HCT116 (cell line): ENCODE measurements at regions of chr17 and their contacts with region 1.

Region 1: GRCh38 chr17:47840740-47841603 is at the start of gene SCRN2:
- DNase-seq: peak; percentile 81
- ATAC-seq: peak; percentile 88
- H3K4me3 ChIP-seq: peak within 1 kb of the TSS; percentile 94 to 98
- H3K27ac ChIP-seq: peak within 1 kb of the TSS; percentile 69
- H3K4me1 ChIP-seq: peaks cover 25 to 46% of the 10 kb centered on the region in 2 experiments
- H3K27me3 ChIP-seq: no peaks in the 10 kb centered on the region
- CTCF ChIP-seq: peak; percentile 98 to 100 (median 99)
- POLR2A ChIP-seq: no peak
- RAD21 ChIP-seq: peak; percentile 100
- total RNA-seq, gene SCRN2: 53.2 TPM

Region 2: DNA sequence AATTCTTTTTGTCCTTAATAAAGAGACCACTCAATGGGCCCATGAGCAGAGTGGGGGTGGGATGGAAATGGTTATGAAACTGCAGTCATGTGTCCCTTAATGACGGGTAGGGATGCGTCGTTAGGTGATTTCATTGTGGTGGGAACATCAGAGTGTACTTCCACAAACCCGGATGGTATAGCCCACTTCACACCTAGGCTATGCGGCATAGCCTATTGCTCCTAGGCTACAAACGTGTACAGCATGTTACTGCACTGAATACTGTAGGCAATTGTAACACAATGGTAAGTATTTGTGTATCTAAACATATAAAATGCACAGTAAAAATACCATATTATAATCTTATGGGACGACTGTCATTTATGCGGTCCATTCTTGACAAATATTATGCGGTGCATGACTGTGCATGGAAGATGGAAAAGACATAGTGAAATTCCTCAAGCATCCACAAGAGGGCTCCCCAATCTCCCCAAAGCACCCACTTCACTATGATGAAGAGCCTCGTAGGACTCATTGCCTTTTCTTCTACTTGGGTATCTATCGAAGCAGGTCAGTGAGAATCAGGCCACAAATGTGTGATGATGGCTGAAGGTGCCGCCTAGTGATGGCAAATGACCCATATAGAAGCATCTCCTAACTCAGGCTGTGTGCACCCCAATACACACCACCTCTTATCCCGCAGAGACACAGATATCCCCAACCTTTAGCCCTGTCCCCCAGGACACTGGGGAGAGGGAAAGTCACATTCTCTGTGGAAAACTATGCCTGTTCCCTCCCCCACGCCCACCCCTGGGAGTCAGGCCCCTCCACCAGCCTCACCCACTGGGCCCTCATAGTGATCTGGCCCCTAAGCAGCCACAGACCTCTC is 64.4 kb before region 1 on chr17:
- CTCF ChIA-PET with region 1: no interaction called
- POLR2A ChIA-PET with region 1: no interaction called
- RAD21 ChIA-PET with region 1: no interaction called
- intact Hi-C with region 1: loop called (anchors 1 kb)
- DNase-seq: peak; percentile 54
- ATAC-seq: peak; percentile 94
- H3K4me3 ChIP-seq: no peak overlapping the region
- H3K27ac ChIP-seq: no peak overlapping the region
- H3K4me1 ChIP-seq: no peaks in the 10 kb centered on the region
- H3K27me3 ChIP-seq: peaks cover 22% of the 10 kb centered on the region; the same call in 1 of the 2 replicates
- CTCF ChIP-seq: peak; percentile 84 to 88 (median 86)
- POLR2A ChIP-seq: no peak
- RAD21 ChIP-seq: peak; percentile 84

Region 3: DNA sequence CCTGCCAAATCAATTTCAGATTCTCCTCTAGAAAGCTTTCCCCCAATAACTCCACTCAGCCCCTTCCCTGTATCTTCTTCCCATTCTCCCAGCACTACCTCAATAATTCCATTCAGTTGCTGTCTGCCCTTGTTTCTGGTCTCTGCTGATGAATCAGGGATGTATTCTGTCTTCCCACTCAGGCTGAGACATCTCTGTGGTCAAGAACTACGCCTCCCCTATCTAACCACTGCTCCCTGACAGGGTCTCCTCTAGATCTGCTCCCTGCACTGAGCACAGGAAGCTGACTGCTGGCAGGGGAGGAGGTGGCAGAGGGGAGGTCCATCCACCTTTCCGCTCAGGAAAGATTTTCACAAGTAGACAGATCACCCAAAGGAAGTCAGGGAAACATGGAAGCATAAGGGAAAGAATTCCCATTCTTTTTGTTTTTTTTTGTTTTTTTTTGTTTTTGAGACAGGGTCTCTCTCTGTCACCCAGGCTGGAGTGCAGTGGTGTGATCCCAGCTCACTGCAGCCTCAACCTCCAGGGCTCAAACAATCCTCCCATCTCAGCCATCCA is 38.1 kb after region 1 on chr17:
- CTCF ChIA-PET with region 1: interaction called, 26 read pairs
- POLR2A ChIA-PET with region 1: no interaction called
- RAD21 ChIA-PET with region 1: interaction called in 1 of 2 experiments, 3 read pairs
- intact Hi-C with region 1: no loop called
- DNase-seq: no peak
- ATAC-seq: no peak
- H3K4me3 ChIP-seq: no peak overlapping the region
- H3K27ac ChIP-seq: no peak overlapping the region
- H3K4me1 ChIP-seq: peaks cover 2 to 34% of the 10 kb centered on the region in 2 experiments
- H3K27me3 ChIP-seq: no peaks in the 10 kb centered on the region
- CTCF ChIP-seq: no peak
- POLR2A ChIP-seq: no peak
- RAD21 ChIP-seq: no peak

Region 4: DNA sequence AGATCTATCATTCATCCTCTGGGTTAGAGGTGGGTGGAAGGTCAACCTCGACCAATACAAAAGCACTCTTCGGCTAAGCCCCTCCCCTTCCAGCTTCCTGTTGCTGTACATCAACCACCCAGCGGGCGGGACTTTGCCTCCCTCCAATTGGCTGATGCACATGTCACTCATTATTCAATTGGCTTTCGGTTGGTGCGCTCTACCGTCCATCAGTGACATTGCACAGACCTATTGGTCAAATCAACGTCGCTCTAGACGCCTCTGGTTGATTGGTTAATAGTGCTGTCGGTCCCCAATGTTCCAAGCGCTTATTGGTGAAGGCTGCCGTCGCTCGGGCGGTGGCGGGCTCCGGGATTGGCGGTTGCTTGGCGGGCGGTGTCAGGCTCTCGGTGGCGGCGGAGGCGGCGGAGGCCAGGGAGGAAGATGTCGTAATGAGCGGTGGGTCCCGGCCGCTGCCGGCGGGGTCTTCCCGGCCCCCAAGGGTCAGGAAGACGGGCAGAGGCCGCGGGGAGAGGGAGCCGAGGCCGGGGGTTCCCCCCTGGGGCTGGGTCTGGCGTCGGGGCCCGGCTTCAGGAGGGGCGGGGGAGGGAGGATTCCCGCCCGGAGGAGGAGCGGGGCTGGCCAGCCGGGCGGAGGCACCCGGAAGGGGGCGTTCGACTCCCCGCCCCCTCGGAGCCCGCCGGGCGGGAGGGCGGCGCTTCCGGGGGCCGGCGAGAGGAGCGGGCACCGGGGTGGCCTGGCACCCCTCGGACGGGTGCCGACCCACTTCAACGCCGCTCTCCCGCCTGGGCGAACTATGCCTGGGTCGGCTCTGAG is 55.1 kb after region 1 on chr17 and contains the start of gene SP2:
- CTCF ChIA-PET with region 1: interaction called, 393 read pairs
- POLR2A ChIA-PET with region 1: interaction called, 24 read pairs
- RAD21 ChIA-PET with region 1: interaction called, 11 to 43 read pairs
- intact Hi-C with region 1: no loop called
- DNase-seq: peak; percentile 100
- ATAC-seq: peak; percentile 92
- H3K4me3 ChIP-seq: peak within 1 kb of the TSS; percentile 84 to 87
- H3K27ac ChIP-seq: peak within 1 kb of the TSS; percentile 78
- H3K4me1 ChIP-seq: peaks cover 4 to 28% of the 10 kb centered on the region in 2 experiments; a peak in 3 of 4 replicates
- H3K27me3 ChIP-seq: no peaks in the 10 kb centered on the region
- CTCF ChIP-seq: no peak
- POLR2A ChIP-seq: peak; percentile 65
- RAD21 ChIP-seq: no peak
- total RNA-seq, gene SP2: 22.2 TPM

Region 5: DNA sequence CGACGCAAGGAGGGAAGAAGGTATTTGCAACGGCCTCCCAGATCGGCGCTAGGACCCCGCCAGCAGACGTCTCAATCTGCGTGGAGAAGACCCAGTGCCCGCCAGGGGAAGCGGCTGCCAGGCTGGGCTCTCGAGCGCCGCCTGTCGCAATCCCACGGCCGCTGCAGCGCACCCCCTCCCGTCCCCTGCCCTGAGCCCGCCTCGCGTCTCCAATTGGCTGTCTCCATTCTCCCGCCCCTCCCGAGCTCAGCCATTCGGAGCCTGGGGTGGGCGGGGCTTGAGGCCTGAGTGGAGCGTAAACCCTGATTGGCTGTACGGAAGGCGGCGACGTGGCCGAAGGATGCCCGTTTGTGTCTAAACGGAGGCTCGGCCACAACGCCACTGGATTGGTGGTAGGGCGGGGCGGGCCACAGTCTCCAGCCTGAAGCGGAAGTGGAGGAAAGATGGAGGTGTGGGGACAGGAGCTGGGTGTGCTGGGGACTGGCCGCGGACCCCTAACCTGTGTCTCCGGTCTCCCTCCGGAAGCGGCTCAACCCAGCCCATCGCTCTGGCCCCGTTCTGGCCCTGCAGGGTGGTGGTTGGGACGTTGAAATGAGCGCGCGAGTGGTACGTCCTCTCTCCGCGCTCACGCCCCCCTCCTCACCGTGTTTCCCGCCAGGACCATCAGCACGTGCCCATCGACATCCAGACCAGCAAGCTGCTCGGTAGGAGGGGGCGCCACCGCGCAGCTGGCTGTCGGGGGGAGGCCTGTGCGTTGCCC is 129.9 kb after region 1 on chr17 and contains the start of gene CDK5RAP3:
- CTCF ChIA-PET with region 1: interaction called, 12 read pairs
- POLR2A ChIA-PET with region 1: interaction called, 9 read pairs
- RAD21 ChIA-PET with region 1: interaction called, 4 read pairs
- intact Hi-C with region 1: loop called (anchors 2 kb)
- DNase-seq: peak; percentile 100
- ATAC-seq: peak; percentile 93
- H3K4me3 ChIP-seq: peak within 1 kb of the TSS; percentile 69 to 82
- H3K27ac ChIP-seq: peak within 1 kb of the TSS; percentile 66
- H3K4me1 ChIP-seq: peaks cover 19 to 51% of the 10 kb centered on the region in 2 experiments
- H3K27me3 ChIP-seq: no peaks in the 10 kb centered on the region
- CTCF ChIP-seq: peak; percentile 96 to 98 (median 98)
- POLR2A ChIP-seq: peak; percentile 46
- RAD21 ChIP-seq: peak; percentile 94
- total RNA-seq, gene CDK5RAP3: 255 TPM

Region 6: DNA sequence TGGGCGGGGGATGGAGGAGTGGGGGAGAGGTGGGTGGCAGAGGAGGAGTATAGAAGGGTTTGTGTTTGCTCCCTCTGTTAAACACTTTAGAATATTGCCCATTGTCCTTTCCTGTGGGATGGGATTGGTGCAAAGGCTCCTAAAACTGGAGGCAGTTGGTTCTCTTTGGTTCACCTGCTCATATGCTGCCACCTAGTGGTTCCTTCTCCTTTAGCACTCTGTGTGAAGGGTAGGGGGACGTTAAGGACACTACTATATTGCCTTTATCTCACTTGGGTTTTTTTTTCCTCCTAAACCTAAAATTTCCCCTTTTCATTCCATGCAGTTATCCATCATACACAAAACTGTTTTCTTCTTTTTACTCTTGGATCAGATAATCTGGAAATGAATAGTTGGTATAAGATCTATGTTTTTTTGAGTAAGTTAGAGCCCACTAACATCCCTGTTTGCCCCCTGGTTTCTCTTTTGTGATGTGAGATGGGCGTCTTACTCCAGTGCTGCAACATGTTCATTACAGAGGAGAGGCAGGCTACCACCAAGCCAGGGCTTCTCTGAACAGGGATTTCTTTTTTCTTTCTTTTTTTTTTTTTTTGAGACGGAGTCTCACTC is 290.3 kb after region 1 on chr17:
- CTCF ChIA-PET with region 1: no interaction called
- POLR2A ChIA-PET with region 1: no interaction called
- RAD21 ChIA-PET with region 1: no interaction called
- intact Hi-C with region 1: loop called (anchors 5 kb)
- DNase-seq: peak; percentile 80
- ATAC-seq: peak; percentile 86
- H3K4me3 ChIP-seq: no peak overlapping the region
- H3K27ac ChIP-seq: no peak overlapping the region
- H3K4me1 ChIP-seq: peaks cover 16 to 20% of the 10 kb centered on the region in 2 experiments
- H3K27me3 ChIP-seq: no peaks in the 10 kb centered on the region
- CTCF ChIP-seq: peak; percentile 95 to 99 (median 96)
- POLR2A ChIP-seq: no peak
- RAD21 ChIP-seq: peak; percentile 98

Region 7: DNA sequence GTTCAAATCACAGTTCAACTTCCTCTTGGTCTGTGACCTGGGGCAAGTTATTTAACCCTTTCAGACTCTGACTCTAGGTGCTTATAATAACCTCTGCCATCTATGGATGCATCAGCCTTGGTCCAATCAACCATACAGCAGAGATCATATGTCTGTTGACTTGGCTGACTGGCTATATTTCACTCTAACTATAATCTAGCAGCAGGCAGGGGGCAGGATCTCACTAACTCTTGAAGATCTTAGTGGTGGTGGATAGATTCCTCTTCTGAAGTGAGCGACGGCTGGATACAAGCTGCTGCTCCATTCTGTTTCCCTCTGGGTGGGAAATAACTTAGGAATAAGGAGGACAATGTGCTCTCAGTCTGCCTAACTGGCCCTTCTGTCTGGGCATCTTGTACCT is 442.4 kb after region 1 on chr17:
- CTCF ChIA-PET with region 1: no interaction called
- POLR2A ChIA-PET with region 1: no interaction called
- RAD21 ChIA-PET with region 1: no interaction called
- intact Hi-C with region 1: no loop called
- DNase-seq: no peak
- ATAC-seq: peak; percentile 61
- H3K4me3 ChIP-seq: no peak overlapping the region
- H3K27ac ChIP-seq: no peak overlapping the region
- H3K4me1 ChIP-seq: peaks cover 0 to 10% of the 10 kb centered on the region in 2 experiments; a peak in 2 of 4 replicates
- H3K27me3 ChIP-seq: no peaks in the 10 kb centered on the region
- CTCF ChIP-seq: no peak
- POLR2A ChIP-seq: no peak
- RAD21 ChIP-seq: no peak

Region 8: GRCh38 chr17:48543107-48543853 is 702.3 kb after region 1 on chr17:
- CTCF ChIA-PET with region 1: no interaction called
- POLR2A ChIA-PET with region 1: no interaction called
- RAD21 ChIA-PET with region 1: no interaction called
- intact Hi-C with region 1: no loop called
- DNase-seq: no peak
- ATAC-seq: peak; percentile 75
- H3K4me3 ChIP-seq: peak overlapping the region; percentile 49 to 59
- H3K27ac ChIP-seq: peak overlapping the region; percentile 51
- H3K4me1 ChIP-seq: peaks cover 0 to 10% of the 10 kb centered on the region in 2 experiments; a peak in 2 of 4 replicates
- H3K27me3 ChIP-seq: no peaks in the 10 kb centered on the region
- CTCF ChIP-seq: 0 out of 6 replicates have a peak, but pooled peaks of 1 of the 3 experiments have one; percentile 21
- POLR2A ChIP-seq: no peak
- RAD21 ChIP-seq: no peak